ENCODE measurements at regions of chr15 and their contacts with region 1.

Region 1: DNA sequence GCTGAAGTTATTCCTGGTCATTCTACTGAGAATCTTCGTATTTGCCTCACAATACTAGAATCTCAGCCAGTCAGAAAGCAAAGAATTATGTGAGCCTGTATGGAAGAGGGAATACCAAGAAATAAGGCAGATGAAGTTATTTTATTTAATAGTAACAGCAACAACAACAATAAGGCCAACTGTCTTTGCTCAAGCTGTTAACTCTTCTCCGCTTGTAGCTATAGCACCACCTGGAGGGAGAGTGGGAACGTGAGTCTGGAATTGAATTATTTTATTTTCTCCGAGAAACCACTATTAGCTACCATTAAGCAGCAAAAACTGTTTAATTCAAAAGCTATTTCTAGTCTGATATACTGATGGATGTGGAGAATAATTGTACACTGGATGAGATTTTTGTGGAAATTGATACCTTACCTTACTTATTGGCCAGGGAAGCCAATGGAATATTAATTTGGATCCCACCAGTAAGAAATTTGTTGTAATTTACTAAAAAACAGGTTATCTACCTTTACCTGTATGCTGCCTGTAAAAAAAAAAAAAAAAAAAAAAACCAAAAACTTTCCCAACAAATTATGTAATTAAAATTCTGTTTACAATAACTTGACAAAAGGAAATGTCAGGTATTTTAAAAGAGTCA is 50.1 kb downstream of the CALML4 start:
- DNase-seq: no peak
- H3K4me3 ChIP-seq: no peak overlapping the region
- CTCF ChIP-seq: peak; percentile 65

Region 2: GRCh38 chr15:67839929-67840748 is 314.9 kb before region 1 on chr15 and contains the start of gene RNU6-1:
- CTCF ChIA-PET with region 1: interaction called, 15 read pairs
- POLR2A ChIA-PET with region 1: no interaction called
- DNase-seq: peak; percentile 52
- H3K4me3 ChIP-seq: peak within 1 kb of the TSS; percentile 96
- CTCF ChIP-seq: no peak

Region 3: GRCh38 chr15:67873777-67874176 is 281.3 kb before region 1 on chr15:
- CTCF ChIA-PET with region 1: interaction called, 10 read pairs
- POLR2A ChIA-PET with region 1: no interaction called
- DNase-seq: no peak
- H3K4me3 ChIP-seq: no peak overlapping the region
- CTCF ChIP-seq: no peak

Region 4: DNA sequence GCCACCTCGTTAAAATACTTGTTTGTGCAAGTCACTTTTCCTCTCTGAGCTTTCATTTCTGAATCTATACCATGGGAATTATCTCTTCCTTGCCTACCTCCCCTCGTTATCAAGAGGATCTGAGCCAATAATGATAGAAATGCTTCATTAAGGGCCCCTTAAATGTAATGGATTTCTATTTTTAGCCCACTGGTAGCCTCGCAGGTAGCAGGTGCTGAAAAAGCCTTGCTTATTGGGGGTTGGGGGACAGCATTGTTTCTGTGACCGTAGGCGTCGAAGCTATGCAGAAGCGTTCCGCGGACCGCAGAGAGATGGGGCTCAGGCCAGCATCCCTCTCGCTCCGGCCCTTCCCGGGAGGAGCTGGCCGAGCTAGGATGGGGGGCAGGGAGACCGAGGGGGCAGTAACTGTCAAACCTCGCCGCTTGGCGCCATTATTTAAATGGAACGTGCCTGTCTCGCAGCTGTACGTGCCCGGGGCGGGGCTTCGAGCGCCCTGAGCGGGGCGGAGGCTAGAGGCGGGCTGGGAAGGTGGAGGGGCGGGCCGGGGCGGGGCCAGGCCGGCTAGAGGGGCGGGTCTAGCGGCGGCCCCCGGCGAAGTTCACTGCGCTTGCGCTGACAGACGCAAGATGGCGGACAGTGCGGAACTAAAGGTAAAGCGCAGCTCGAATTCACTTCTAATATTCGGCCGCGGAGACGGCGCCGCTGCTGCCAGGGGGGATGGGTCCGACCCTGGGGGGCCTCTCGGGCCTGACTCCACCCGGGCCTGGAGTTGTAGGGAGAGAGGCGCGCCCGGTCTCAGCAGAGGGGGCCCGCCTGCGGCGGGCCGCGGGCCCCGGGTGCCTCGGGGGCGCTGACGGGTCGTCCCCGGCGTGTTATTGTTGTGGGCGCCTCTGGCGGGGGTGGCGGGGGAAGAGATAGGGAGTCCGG is 101.1 kb before region 1 on chr15 and contains the start of gene PIAS1:
- CTCF ChIA-PET with region 1: interaction called, 13 read pairs
- POLR2A ChIA-PET with region 1: interaction called, 4 read pairs
- DNase-seq: no peak
- H3K4me3 ChIP-seq: peak within 1 kb of the TSS; percentile 81
- CTCF ChIP-seq: no peak

Region 5: DNA sequence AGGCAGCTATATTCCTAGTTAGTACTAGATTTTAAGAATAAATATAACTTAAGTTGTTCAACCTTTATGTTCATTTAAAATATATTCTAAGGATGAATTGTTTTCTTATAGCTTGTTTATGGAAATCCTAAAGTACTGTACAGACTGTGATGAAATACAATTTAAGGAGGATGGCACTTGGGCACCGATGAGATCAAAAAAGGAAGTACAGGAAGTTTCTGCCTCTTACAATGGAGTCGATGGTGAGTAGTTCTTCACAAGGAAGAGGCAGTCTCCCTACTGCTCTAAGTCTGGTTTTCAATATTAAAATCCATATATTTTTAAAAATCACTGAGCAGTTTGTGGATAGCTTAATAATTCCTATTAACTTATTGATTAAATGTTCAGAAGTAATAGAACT is 20.5 kb after region 1 on chr15:
- CTCF ChIA-PET with region 1: interaction called, 14 read pairs
- POLR2A ChIA-PET with region 1: no interaction called
- DNase-seq: no peak
- H3K4me3 ChIP-seq: no peak overlapping the region
- CTCF ChIP-seq: no peak